Activated CD4-positive, alpha-beta T cell treated with anti-CD3 and anti-CD28 coated beads for 36 hours (primary cell): ENCODE measurements at regions of chr1 and their contacts with region 1.

Region 1: DNA sequence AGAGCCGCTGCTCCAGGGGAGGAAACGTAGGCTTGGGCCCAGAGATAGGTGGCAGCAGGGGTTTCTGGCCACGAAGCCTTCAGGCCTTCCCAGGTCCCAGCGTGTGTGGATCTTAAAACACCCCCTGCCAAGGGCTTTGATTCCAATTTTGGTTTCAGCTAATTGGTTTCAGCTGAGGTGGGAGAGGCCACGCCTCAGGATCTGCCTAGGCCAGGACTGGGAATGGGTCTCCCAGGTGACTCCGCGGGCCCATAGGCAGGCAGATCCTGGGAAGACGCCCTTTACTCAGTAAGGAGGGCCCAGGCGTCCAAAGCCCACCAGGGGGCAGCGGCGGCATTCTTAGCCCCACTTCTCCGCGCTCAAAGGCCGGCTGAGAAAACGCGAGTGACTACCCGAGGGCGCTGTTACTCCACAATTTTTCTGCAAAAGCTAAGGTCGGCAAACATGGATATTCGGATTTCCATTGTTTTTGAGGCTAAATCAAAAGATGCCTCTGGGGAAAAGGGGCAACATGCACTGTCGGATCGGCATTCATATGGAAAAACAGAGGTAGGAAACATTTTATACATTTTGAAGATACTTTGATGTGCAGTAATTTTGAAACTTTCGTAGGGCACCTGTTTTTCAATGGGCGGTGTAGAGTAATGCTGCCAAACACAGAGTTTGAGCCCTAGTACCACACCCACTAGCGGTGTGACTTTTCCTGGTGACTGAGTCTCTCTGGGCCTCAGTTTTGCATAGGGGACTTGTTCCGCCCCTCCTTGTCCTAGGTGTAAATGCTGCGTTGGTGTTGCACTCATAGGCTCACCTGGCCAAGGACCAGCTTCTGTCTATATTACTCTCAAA is 31.8 kb upstream of the BCL10 start:
- DNase-seq: peak; percentile 84
- ATAC-seq: peak; percentile 94
- H3K4me3 Mint-ChIP-seq: no peak overlapping the region
- H3K27ac Mint-ChIP-seq: no peak overlapping the region
- H3K4me1 Mint-ChIP-seq: peaks cover 8% of the 10 kb centered on the region
- H3K27me3 Mint-ChIP-seq: peaks cover 35% of the 10 kb centered on the region

Region 2: DNA sequence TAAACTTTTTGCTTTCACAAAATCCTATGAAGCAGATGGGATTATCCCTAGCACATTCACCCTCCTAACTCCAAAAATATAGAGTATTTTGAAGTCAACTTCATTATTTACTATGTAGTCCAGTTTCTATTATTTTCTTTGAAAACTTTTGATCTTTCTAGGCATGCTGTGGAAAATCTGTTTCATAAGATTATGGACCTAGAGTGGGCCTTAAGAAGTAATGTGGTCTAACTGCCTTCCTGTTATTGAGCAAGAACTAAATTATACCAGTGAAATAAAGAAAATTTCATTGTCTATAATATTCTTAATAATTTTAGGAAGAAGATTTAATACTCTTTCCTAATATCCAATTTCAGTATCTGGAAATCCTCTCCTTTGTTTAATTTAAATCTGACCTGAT is 1106.1 kb before region 1 on chr1:
- CTCF ChIA-PET with region 1: no interaction called
- POLR2A ChIA-PET with region 1: no interaction called
- intact Hi-C with region 1: no loop called
- DNase-seq: no peak
- ATAC-seq: no peak
- H3K4me3 Mint-ChIP-seq: no peak overlapping the region
- H3K27ac Mint-ChIP-seq: no peak overlapping the region
- H3K4me1 Mint-ChIP-seq: peaks cover 9% of the 10 kb centered on the region
- H3K27me3 Mint-ChIP-seq: no peaks in the 10 kb centered on the region

Region 3: DNA sequence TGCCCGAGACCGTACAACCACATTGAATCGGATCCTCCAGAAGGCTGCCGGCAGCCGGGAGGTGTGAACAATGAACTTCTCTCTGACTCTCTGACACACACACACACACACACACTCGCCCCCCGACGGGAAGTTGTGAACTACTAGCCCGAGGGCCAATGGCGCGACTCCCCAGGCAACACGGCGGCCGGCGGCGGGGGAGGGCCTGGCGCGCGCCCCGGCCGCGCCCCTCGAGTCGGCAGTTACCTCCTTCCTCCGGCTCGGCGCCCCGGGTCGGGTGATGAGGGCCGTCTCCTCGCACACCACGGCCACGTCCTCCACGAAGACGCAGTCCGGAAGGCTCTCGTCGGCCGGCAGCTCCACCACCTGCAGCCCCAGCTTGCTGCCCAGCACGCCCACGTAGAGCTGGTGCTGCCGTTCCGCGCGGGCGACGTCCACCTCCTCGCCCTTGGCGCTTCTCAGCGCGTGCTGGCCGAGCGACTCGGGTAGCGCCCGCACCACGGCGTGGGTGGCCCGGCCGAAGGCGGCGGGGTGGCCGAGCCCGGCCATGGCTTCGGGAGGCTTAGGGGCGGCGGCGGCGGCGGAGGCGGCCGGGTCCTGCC is 156.4 kb after region 1 on chr1:
- CTCF ChIA-PET with region 1: interaction called, 4 read pairs
- POLR2A ChIA-PET with region 1: no interaction called
- intact Hi-C with region 1: loop called in 1 of 2 experiments (anchors 10 kb)
- DNase-seq: peak; percentile 58
- ATAC-seq: peak; percentile 71
- H3K4me3 Mint-ChIP-seq: peak overlapping the region; percentile 52
- H3K27ac Mint-ChIP-seq: no peak overlapping the region
- H3K4me1 Mint-ChIP-seq: peaks cover 4% of the 10 kb centered on the region
- H3K27me3 Mint-ChIP-seq: peaks cover 54% of the 10 kb centered on the region

Region 4: GRCh38 chr1:85576642-85577418 is 268.6 kb after region 1 on chr1:
- CTCF ChIA-PET with region 1: interaction called, 10 read pairs
- POLR2A ChIA-PET with region 1: no interaction called
- intact Hi-C with region 1: loop called (anchors 1 to 2 kb)
- DNase-seq: peak; percentile 80
- ATAC-seq: peak; percentile 50
- H3K4me3 Mint-ChIP-seq: peak overlapping the region; percentile 62
- H3K27ac Mint-ChIP-seq: no peak overlapping the region
- H3K4me1 Mint-ChIP-seq: peaks cover 31% of the 10 kb centered on the region
- H3K27me3 Mint-ChIP-seq: peaks cover 65% of the 10 kb centered on the region

Region 5: GRCh38 chr1:85692730-85693314 is 384.6 kb after region 1 on chr1:
- CTCF ChIA-PET with region 1: interaction called, 3 read pairs
- POLR2A ChIA-PET with region 1: no interaction called
- intact Hi-C with region 1: loop called in 1 of 2 experiments (anchors 2 kb)
- DNase-seq: no peak
- ATAC-seq: no peak
- H3K4me3 Mint-ChIP-seq: no peak overlapping the region
- H3K27ac Mint-ChIP-seq: no peak overlapping the region
- H3K4me1 Mint-ChIP-seq: peaks cover 6% of the 10 kb centered on the region
- H3K27me3 Mint-ChIP-seq: no peaks in the 10 kb centered on the region

Region 6: GRCh38 chr1:85707990-85708828 is 400.0 kb after region 1 on chr1 and contains the start of gene ZNHIT6:
- CTCF ChIA-PET with region 1: interaction called, 6 read pairs
- POLR2A ChIA-PET with region 1: no interaction called
- intact Hi-C with region 1: loop called in 1 of 2 experiments (anchors 10 kb)
- DNase-seq: peak; percentile 93
- ATAC-seq: peak; percentile 96
- H3K4me3 Mint-ChIP-seq: no peak within 1 kb of the TSS
- H3K27ac Mint-ChIP-seq: no peak within 1 kb of the TSS
- H3K4me1 Mint-ChIP-seq: peaks cover 26% of the 10 kb centered on the region
- H3K27me3 Mint-ChIP-seq: no peaks in the 10 kb centered on the region
- total RNA-seq, gene ZNHIT6: 20.7 to 23.8 TPM

Region 7: GRCh38 chr1:85884372-85885035 is 576.3 kb after region 1 on chr1:
- CTCF ChIA-PET with region 1: no interaction called
- POLR2A ChIA-PET with region 1: no interaction called
- intact Hi-C with region 1: loop called in 1 of 2 experiments (anchors 10 kb)
- DNase-seq: no peak
- ATAC-seq: no peak
- H3K4me3 Mint-ChIP-seq: no peak overlapping the region
- H3K27ac Mint-ChIP-seq: no peak overlapping the region
- H3K4me1 Mint-ChIP-seq: no peaks in the 10 kb centered on the region
- H3K27me3 Mint-ChIP-seq: no peaks in the 10 kb centered on the region

Region 8: DNA sequence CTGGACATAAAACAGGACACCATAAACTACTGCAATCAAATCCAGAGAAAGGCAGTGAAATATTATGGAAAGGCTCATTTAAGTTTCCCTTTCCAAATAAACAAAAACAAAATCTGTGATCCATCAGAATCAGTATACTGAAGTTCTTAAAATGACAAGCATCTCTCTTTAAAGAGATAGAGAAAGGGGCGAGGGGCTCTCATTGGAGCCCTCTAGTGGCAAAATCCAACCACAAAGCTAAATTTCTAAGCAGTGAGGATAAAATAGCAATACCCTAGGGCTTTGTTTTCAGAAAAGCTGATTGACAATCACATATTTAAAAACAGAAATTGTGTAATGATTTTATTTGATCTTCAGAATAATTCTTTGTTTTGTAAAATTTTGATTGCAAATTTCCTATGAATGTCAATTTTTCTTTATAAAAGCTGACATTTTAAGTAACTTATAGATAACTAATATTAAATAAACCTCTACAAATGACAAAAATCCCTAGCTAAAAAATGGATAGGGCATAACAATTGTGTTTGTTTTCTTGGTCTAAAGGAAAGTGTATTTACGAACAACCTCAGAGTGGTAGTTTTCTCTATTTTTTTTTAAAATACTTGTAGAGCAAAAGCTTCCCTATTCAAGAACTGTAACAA is 710.2 kb after region 1 on chr1:
- CTCF ChIA-PET with region 1: interaction called, 4 read pairs
- POLR2A ChIA-PET with region 1: no interaction called
- intact Hi-C with region 1: loop called in 1 of 2 experiments (anchors 1 kb)
- DNase-seq: peak; percentile 19
- ATAC-seq: peak; percentile 44
- H3K4me3 Mint-ChIP-seq: no peak overlapping the region
- H3K27ac Mint-ChIP-seq: no peak overlapping the region
- H3K4me1 Mint-ChIP-seq: no peaks in the 10 kb centered on the region
- H3K27me3 Mint-ChIP-seq: no peaks in the 10 kb centered on the region